H1 (cell line): ENCODE measurements at regions of chr1 and their contacts with region 1.

Region 1: DNA sequence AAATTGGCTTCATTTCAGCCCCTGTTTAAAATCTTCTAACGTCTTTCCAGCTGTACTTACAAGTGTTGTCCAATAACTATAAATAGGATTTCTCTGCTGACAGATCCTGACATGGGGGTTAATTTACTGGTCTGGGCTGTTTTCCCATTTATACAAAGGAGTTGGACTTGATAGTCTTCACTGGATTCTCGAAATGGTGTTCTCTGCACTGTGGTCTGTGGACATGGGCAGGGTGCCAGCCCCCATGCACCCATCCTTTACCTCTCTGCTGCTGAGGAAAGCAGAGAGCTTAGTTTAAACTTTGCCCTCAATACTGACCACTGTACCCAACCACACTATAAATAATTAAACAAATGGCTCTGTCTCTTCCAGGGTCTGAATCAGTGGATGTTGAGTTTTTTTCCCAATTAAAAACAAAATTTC is 5.2 kb downstream of the DIO1 start:
- DNase-seq: no peak
- H3K4me3 ChIP-seq: no peak overlapping the region
- H3K27ac ChIP-seq: no peak overlapping the region
- H3K4me1 ChIP-seq: peaks cover 0 to 2% (median 0%) of the 10 kb centered on the region in 4 experiments; a peak in 1 of 7 replicates
- H3K27me3 ChIP-seq: no peaks in the 10 kb centered on the region
- CTCF ChIP-seq: no peak
- EP300 ChIP-seq: no peak
- POLR2A ChIP-seq: no peak
- RAD21 ChIP-seq: no peak

Region 2: GRCh38 chr1:53754484-53755312 is 144.5 kb before region 1 on chr1:
- CTCF ChIA-PET with region 1: no interaction called
- POLR2A ChIA-PET with region 1: no interaction called
- DNase-seq: no peak
- H3K4me3 ChIP-seq: no peak overlapping the region
- H3K27ac ChIP-seq: no peak overlapping the region
- H3K4me1 ChIP-seq: no peaks in the 10 kb centered on the region
- H3K27me3 ChIP-seq: no peaks in the 10 kb centered on the region
- CTCF ChIP-seq: peak; percentile 26 to 82 (median 69)
- EP300 ChIP-seq: no peak
- POLR2A ChIP-seq: no peak
- RAD21 ChIP-seq: peak; percentile 76 to 77

Region 3: GRCh38 chr1:53826367-53826766 is 72.8 kb before region 1 on chr1:
- CTCF ChIA-PET with region 1: no interaction called
- POLR2A ChIA-PET with region 1: no interaction called
- DNase-seq: no peak
- H3K4me3 ChIP-seq: no peak overlapping the region
- H3K27ac ChIP-seq: no peak overlapping the region
- H3K4me1 ChIP-seq: no peaks in the 10 kb centered on the region
- H3K27me3 ChIP-seq: no peaks in the 10 kb centered on the region
- CTCF ChIP-seq: peak in 1 of 3 experiments; percentile 20; a peak in 2 of 4 replicates
- EP300 ChIP-seq: no peak
- POLR2A ChIP-seq: no peak
- RAD21 ChIP-seq: no peak

Region 4: GRCh38 chr1:53878492-53879105 is 20.6 kb before region 1 on chr1:
- CTCF ChIA-PET with region 1: interaction called, 17 read pairs
- POLR2A ChIA-PET with region 1: interaction called, 4 read pairs
- DNase-seq: no peak
- H3K4me3 ChIP-seq: no peak overlapping the region
- H3K27ac ChIP-seq: no peak overlapping the region
- H3K4me1 ChIP-seq: no peaks in the 10 kb centered on the region
- H3K27me3 ChIP-seq: no peaks in the 10 kb centered on the region
- CTCF ChIP-seq: peak in 2 of 3 experiments; percentile 41 to 56; a peak in 2 of 4 replicates
- EP300 ChIP-seq: no peak
- POLR2A ChIP-seq: no peak
- RAD21 ChIP-seq: peak; percentile 53 to 55

Region 5: GRCh38 chr1:53909946-53910345 is 10.7 kb after region 1 on chr1:
- CTCF ChIA-PET with region 1: interaction called, 10 read pairs
- POLR2A ChIA-PET with region 1: interaction called, 5 read pairs
- DNase-seq: no peak
- H3K4me3 ChIP-seq: no peak overlapping the region
- H3K27ac ChIP-seq: no peak overlapping the region
- H3K4me1 ChIP-seq: peaks cover 7 to 13% (median 11%) of the 10 kb centered on the region in 4 experiments
- H3K27me3 ChIP-seq: no peaks in the 10 kb centered on the region
- CTCF ChIP-seq: no peak
- EP300 ChIP-seq: no peak
- POLR2A ChIP-seq: no peak
- RAD21 ChIP-seq: no peak